AG04449 (cell line): ENCODE measurements at regions of chr15 and their contacts with region 1.

Region 1: GRCh38 chr15:38002883-38003477 is 68.5 kb downstream of the TMCO5A start:
- DNase-seq: no peak
- H3K4me3 ChIP-seq: no peak overlapping the region
- CTCF ChIP-seq: peak; percentile 81

Region 2: GRCh38 chr15:38354315-38354929 is 351.4 kb after region 1 on chr15:
- CTCF ChIA-PET with region 1: interaction called, 70 read pairs
- POLR2A ChIA-PET with region 1: no interaction called
- DNase-seq: no peak
- H3K4me3 ChIP-seq: no peak overlapping the region
- CTCF ChIP-seq: peak; percentile 64

Region 3: GRCh38 chr15:38389924-38390542 is 387.1 kb after region 1 on chr15:
- CTCF ChIA-PET with region 1: interaction called, 81 read pairs
- POLR2A ChIA-PET with region 1: no interaction called
- DNase-seq: no peak
- H3K4me3 ChIP-seq: no peak overlapping the region
- CTCF ChIP-seq: peak; percentile 76

Region 4: GRCh38 chr15:38414357-38414756 is 411.4 kb after region 1 on chr15:
- CTCF ChIA-PET with region 1: interaction called, 65 read pairs
- POLR2A ChIA-PET with region 1: no interaction called
- DNase-seq: peak; percentile 12
- H3K4me3 ChIP-seq: no peak overlapping the region
- CTCF ChIP-seq: peak; percentile 84

Region 5: DNA sequence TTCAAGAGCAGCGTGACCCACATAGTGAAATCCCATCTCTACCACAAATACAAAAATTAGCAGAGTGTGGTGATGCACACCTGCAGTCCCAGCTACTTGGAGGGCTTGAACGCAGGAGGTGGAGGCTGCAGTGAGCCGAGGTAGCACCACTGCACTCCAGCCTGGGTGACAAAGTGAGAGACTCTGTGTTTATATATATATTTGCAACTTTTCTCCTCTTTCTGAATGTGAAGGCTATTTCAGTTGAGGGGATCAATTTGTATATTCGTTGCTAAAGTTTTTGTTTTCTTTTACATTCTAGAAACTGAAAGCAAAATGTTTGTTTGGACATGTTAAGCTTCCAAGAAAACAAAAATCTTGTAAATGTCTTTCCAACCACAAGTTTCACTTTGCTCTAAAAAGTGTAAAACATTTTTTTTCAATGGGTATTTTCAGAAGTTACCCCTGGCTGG is 421.1 kb after region 1 on chr15:
- CTCF ChIA-PET with region 1: interaction called, 23 read pairs
- POLR2A ChIA-PET with region 1: no interaction called
- DNase-seq: no peak
- H3K4me3 ChIP-seq: no peak overlapping the region
- CTCF ChIP-seq: no peak